AG04450 (cell line): ENCODE measurements at regions of chrX and their contacts with region 1.

Region 1: DNA sequence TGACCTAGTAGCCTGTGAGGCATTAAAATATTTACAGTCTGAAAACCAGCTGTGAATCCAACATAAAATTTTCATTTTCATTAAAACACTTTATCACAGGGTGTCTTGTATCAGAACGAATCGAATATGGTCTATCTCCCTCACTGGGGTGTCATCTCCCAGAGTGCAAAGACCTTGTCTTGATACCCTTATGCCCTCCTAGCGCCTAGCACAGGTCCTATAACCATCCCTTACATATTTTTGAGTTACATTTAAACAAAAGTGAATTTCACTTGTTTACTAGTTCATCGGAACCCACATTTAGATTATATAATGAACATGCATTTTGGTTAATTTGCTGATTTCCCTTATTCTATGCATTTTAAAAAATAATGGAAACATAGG is 14.0 kb downstream of the DIPK2B start:
- DNase-seq: no peak
- H3K4me3 ChIP-seq: no peak overlapping the region; the same call in 1 of the 2 replicates
- H3K27ac ChIP-seq: no peak overlapping the region
- H3K27me3 ChIP-seq: no peaks in the 10 kb centered on the region
- CTCF ChIP-seq: no peak

Region 2: DNA sequence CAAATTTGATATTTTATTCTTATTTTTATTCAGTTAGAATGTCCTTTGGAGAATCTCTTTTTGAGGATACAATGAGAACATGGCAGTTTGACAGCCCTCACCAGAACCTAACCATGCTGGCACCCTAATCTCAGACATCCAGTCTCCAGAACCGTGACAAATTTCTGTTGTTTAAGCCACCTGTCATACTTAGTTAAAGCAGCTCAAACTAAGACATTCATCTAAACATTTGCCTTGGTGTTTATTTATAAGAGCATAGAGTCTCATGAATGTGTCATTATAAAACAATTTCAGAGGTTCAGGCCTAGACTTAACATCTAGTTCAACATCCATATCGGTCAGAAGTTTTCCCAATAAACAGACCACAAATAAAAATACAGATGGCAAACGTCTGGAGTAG is 518.9 kb before region 1 on chrX:
- CTCF ChIA-PET with region 1: no interaction called
- POLR2A ChIA-PET with region 1: no interaction called
- DNase-seq: peak; percentile 0
- H3K4me3 ChIP-seq: no peak overlapping the region
- H3K27ac ChIP-seq: no peak overlapping the region
- H3K27me3 ChIP-seq: no peaks in the 10 kb centered on the region
- CTCF ChIP-seq: no peak

Region 3: DNA sequence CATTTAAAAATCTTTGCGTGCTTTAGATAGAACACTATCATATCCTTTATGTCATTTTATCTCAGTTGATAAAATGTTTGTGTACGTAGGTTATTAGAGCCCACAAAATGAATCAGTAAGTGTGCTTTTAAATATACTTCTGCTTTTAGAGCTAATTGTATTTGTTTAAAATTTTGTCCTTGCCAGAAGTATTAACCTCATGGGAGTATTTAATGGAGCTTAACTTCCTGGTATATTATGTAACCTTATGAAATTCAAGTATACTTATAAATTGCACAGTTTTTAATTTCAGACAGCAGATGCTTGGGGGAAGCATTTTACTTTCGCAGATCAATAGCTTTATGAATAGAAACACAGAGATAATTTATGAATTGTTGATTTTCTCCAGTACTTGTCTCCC is 76.1 kb before region 1 on chrX:
- CTCF ChIA-PET with region 1: no interaction called
- POLR2A ChIA-PET with region 1: no interaction called
- DNase-seq: no peak
- H3K4me3 ChIP-seq: no peak overlapping the region
- H3K27ac ChIP-seq: no peak overlapping the region
- H3K27me3 ChIP-seq: no peaks in the 10 kb centered on the region
- CTCF ChIP-seq: no peak

Region 4: DNA sequence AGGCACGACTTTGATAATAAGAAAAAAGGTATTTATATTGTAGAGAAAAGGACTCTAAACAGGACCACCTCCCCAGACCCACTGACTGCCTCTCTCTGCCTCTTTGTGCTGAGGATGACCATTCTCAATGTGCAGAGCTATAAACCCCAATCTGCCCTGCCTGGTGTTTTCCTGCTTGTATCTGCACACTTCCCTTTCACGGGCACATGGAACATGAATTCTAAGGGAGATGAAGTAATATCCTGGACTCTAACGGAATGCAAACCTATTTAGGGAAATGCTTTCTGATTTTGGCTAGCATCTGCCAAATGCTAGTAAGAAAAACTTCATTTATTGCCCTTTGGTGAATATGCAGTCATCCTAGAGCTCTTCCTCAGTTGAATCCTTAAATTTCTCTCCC is 11.7 kb after region 1 on chrX:
- CTCF ChIA-PET with region 1: interaction called, 12 read pairs
- POLR2A ChIA-PET with region 1: no interaction called
- DNase-seq: no peak
- H3K4me3 ChIP-seq: no peak overlapping the region
- H3K27ac ChIP-seq: no peak overlapping the region
- H3K27me3 ChIP-seq: no peaks in the 10 kb centered on the region
- CTCF ChIP-seq: no peak